Lower leg skin (tissue), 4 donors: ENCODE measurements at regions of chr11 and their contacts with region 1.

Region 1: GRCh38 chr11:66677599-66678375 is at the start of gene RBM4B:
- DNase-seq: peak; percentile 93 to 99
- H3K4me3 ChIP-seq: peak within 1 kb of the TSS; percentile 67
- CTCF ChIP-seq: no peak
- POLR2A ChIP-seq: no peak
- total RNA-seq, gene RBM4B: 8.6 to 18.0 (median 12.2) TPM

Region 2: DNA sequence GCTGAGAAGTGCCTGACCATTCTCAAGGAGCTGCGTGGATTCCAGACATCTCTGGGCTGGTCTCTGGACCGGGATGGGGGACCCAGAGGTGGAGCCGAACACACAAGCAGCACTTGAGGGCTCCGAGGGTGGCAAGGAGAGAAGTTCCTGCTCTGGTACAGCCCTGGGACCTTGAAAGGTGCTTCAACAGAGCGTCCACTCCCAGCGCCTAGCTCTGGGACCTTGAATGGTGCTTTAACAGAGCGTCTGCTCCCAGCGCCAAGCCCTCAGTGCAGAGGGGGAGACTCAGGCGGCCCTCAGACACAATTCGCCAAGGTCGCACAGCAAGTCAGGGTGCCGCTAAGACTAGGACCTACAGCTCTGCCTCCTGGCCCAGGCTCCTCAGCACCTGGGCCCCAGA is 267.6 kb before region 1 on chr11:
- intact Hi-C with region 1: loop called (anchors 2 kb)
- DNase-seq: no peak
- H3K4me3 ChIP-seq: no peak overlapping the region
- CTCF ChIP-seq: no peak
- POLR2A ChIP-seq: no peak

Region 3: DNA sequence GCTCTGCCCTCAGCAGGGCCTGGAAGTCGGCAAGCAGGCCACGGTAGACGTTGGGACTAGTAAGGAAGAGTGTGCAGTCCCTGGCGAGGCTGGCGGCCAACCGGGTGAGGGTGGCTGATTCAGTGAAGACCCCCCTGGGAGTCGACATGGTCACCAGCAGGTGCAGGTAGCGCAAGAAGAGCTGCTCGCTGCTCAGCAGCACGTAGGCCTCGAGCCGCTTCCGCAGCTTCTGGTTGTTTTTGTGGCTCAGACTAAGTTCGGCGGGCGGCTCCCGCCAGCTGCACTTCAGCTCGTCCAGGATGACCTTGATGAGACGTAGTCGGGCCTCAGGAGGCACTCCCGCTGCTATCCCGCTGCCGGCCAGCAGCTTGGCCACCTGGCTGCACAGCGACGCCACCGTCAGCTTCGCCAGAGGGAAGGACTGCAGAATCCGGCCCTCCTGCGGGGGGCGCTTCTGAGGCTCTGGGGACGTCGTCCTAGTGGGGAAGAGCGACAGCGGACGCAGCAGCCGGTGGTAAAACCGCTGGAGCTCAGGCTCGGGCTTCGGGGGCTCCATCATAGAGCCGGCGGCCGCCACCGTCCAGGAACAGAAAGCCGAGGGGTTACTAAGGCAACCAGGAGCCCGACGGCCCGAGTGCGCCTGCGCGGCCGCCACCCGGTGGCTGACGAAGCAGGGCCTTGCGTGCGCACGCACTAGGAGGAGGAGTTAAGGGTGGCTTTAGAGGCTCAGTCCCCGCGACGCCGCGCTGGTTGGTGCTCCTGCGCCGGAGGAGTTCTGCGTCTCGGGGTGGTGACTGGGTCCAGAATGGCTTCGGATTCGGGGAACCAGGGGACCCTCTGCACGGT is 85.1 kb before region 1 on chr11 and contains the starts of genes CCDC87 and CCS:
- intact Hi-C with region 1: loop called (anchors 10 kb)
- DNase-seq: peak; percentile 95 to 99
- H3K4me3 ChIP-seq: peak within 1 kb of the TSS; percentile 78
- CTCF ChIP-seq: no peak
- POLR2A ChIP-seq: no peak
- total RNA-seq, gene CCDC87: 0.11 to 0.42 (median 0.25) TPM
- total RNA-seq, gene CCS: 13.7 to 24.2 (median 15.2) TPM

Region 4: GRCh38 chr11:66701432-66702240 is 23.8 kb after region 1 on chr11:
- intact Hi-C with region 1: no loop called
- DNase-seq: no peak
- H3K4me3 ChIP-seq: no peak overlapping the region
- CTCF ChIP-seq: no peak
- POLR2A ChIP-seq: no peak

Region 5: GRCh38 chr11:66842896-66843775 is 165.3 kb after region 1 on chr11 and contains the start of gene RCE1:
- intact Hi-C with region 1: no loop called
- DNase-seq: peak; percentile 86 to 97
- H3K4me3 ChIP-seq: peak within 1 kb of the TSS; percentile 92
- CTCF ChIP-seq: no peak
- POLR2A ChIP-seq: peak in 1 of 2 donors; percentile 86
- total RNA-seq, gene RCE1: 23.8 to 32.8 (median 29.7) TPM

Region 6: GRCh38 chr11:67745176-67745726 is 1067.5 kb after region 1 on chr11:
- intact Hi-C with region 1: no loop called
- DNase-seq: no peak
- H3K4me3 ChIP-seq: no peak overlapping the region
- CTCF ChIP-seq: peak in 1 of 3 donors; percentile 29
- POLR2A ChIP-seq: no peak